ENCODE measurements at regions of chr1 and their contacts with region 1.

Region 1: GRCh38 chr1:89632657-89633247 is at the start of gene LRRC8C:
- DNase-seq: peak; percentile 96
- ATAC-seq: peak; percentile 84
- H3K4me3 Mint-ChIP-seq: peak within 1 kb of the TSS; percentile 95
- H3K27ac Mint-ChIP-seq: peak within 1 kb of the TSS; percentile 92
- H3K4me1 Mint-ChIP-seq: peaks cover 67% of the 10 kb centered on the region
- H3K27me3 Mint-ChIP-seq: no peaks in the 10 kb centered on the region
- total RNA-seq, gene LRRC8C: 38.2 to 41.8 TPM

Region 2: DNA sequence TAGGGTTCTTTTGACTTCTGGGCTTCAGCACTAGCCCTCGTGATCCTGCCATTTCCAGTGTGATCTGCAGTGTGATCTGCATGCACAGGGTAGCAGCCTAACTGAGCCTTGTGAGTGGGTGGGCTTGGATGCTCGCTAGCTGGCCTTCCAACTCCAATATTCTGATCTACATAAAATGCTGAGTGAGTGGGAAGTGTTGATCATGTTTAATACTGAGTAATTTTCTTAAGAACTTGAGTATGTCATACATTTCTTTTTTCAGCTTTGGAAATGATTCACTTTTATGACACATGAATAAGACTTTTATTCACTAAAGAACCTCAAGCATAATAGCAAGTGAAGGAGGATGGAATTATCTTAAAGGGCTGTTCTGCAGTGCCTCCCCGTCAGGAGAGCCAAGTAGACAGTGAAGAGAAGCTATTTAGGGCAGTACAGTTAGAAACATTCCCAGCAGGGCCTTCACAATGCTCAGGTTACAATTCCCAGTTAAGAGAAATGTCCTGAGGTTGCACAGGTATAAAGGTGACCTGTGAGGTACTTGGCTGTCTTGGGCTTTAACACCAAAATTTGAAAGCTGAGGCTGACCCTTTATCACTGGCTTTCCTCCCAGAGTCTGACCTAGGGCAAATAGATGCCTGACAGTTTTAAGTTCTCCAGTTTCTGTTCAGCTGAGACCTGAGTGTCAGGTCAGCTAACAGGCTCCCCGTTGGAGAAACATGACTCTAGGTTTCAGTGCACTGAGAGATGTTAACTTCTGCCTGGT is 28.9 kb before region 1 on chr1:
- POLR2A ChIA-PET with region 1: interaction called, 98 read pairs
- DNase-seq: no peak
- ATAC-seq: no peak
- H3K4me3 Mint-ChIP-seq: no peak overlapping the region
- H3K27ac Mint-ChIP-seq: peak overlapping the region; percentile 62
- H3K4me1 Mint-ChIP-seq: peaks cover 73% of the 10 kb centered on the region
- H3K27me3 Mint-ChIP-seq: no peaks in the 10 kb centered on the region

Region 3: GRCh38 chr1:89611721-89612120 is 21.0 kb before region 1 on chr1:
- POLR2A ChIA-PET with region 1: interaction called, 98 read pairs
- DNase-seq: no peak
- ATAC-seq: peak; percentile 44
- H3K4me3 Mint-ChIP-seq: peak overlapping the region; percentile 81
- H3K27ac Mint-ChIP-seq: peak overlapping the region; percentile 99
- H3K4me1 Mint-ChIP-seq: peaks cover 58% of the 10 kb centered on the region
- H3K27me3 Mint-ChIP-seq: no peaks in the 10 kb centered on the region

Region 4: DNA sequence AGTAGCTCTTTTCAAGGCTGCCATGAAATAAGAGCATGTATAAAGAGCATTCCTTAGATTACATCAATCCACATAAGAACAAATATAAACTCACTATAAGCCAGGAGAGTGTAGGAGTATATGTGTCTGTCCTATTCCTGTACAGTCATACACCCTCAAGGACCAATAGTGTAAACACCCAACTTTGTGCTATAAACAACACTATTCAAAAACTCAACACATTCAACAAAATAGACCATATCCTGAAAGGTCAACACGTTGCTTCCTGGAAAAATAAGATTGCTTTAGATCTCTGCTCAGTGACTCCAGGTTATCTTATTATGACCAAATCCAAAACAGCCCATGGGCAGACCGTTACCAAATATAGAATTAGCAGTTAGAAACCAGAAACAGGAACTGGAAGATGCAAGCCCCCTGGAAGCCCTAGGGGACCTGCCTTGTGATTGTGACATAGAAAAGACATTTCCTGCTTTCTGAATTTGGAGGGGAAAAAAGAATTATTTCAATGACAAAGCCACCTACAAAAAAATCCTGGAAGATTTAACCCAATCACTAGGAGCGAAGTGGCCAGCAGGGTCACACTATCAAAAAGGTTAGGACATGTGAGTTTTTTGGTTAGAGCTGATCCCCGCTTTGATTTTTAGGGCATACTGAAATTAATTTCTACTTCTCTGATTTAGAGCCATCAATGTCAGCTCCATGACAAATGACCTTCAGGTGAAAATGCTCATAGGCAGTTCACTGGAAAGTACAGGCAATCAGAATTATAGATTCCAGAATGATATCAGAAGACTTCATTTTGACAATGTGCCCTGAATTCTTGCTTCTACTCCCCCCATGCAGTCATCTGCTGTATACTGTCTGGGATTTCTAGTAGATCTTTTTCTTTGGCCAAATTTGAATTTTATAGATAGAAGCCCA is 60.1 kb after region 1 on chr1:
- POLR2A ChIA-PET with region 1: interaction called, 11 read pairs
- DNase-seq: no peak
- ATAC-seq: peak; percentile 21
- H3K4me3 Mint-ChIP-seq: peak overlapping the region; percentile 7
- H3K27ac Mint-ChIP-seq: peak overlapping the region; percentile 69
- H3K4me1 Mint-ChIP-seq: peaks cover 46% of the 10 kb centered on the region
- H3K27me3 Mint-ChIP-seq: no peaks in the 10 kb centered on the region

Region 5: DNA sequence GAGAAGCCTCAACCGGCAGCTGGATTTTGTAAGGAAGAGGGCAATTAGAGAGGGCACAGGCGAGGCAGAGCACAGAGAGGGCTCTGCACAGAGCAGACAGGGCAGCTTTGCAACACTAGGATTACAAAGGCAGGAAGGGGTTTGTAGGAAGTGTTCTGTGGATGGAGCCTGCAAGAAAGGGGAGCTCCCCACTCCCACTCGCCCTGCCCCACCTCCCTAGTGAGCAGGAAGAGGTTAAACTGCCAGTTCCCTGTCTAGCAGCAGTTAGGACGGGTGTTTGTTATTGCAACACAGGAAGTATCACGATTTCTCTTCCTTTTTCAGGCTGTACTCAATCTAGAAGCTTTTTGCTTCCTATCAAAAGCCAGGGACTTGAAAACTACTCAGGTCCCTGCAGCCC is 124.8 kb after region 1 on chr1:
- POLR2A ChIA-PET with region 1: interaction called, 61 read pairs
- DNase-seq: peak; percentile 60
- ATAC-seq: peak; percentile 90
- H3K4me3 Mint-ChIP-seq: peak overlapping the region; percentile 82
- H3K27ac Mint-ChIP-seq: peak overlapping the region; percentile 96
- H3K4me1 Mint-ChIP-seq: peaks cover 75% of the 10 kb centered on the region
- H3K27me3 Mint-ChIP-seq: no peaks in the 10 kb centered on the region

Region 6: DNA sequence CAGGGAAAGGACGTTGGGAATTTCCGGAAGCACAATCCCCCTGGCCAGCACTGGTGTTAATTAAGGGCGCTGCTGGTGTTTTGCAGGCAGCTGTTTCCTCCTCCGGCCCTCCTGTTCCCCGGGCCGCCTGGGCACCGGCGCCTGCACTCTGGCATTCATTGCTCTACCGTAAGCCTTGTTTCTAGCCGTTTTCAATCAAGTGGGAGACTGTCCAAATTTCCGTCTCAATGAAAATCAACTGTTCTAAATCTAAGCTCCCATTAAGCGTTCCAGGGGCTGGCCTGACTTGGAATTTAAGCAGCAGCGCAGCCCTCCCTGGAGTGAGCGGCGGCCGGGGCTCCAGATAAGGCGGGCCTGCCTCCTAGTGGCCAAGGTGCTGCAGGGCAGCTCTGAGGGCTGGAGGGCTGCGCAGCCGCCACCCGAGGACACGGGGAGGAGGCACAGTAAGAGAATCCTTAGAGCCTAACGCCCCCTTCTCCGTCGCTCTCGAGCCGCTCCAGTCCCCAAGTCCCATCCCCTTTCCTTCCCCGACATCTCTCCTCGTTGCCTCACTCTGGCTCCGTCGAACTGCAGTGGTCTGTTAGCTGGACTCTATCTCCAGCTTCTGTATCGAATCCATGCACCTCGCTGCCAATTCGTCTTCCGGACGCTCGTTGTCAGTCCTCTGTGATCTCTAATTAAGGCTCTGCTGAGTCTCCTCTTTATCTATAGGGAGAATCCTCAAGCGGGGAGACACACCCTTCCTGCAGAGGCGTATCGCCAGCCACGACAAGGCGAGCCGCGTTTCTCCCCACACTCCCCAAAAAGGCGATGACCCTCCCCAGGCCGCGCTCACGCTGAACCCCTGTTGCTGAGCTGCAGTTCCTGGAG is 130.3 kb after region 1 on chr1:
- POLR2A ChIA-PET with region 1: interaction called, 61 read pairs
- DNase-seq: peak; percentile 89
- ATAC-seq: peak; percentile 99
- H3K4me3 Mint-ChIP-seq: peak overlapping the region; percentile 93
- H3K27ac Mint-ChIP-seq: peak overlapping the region; percentile 86
- H3K4me1 Mint-ChIP-seq: peaks cover 46% of the 10 kb centered on the region
- H3K27me3 Mint-ChIP-seq: peaks cover 8% of the 10 kb centered on the region